ENCODE measurements at regions of chr6 and their contacts with region 1.

Region 1: GRCh38 chr6:6724539-6725467 is 136.3 kb downstream of the LY86 start:
- DNase-seq: peak; percentile 33 to 74 (median 62)
- ATAC-seq: peak; percentile 82
- H3K4me3 ChIP-seq: peak overlapping the region; percentile 44
- H3K4me3 Mint-ChIP-seq: peak overlapping the region; percentile 67 to 89 (median 81)
- H3K27ac ChIP-seq: no peak overlapping the region
- H3K27ac Mint-ChIP-seq: peak overlapping the region; percentile 47 to 84 (median 74)
- H3K4me1 ChIP-seq: peaks cover 0 to 5% of the 10 kb centered on the region in 2 donors
- H3K4me1 Mint-ChIP-seq: peaks cover 6 to 28% (median 12%) of the 10 kb centered on the region in 7 donors
- H3K27me3 ChIP-seq: no peaks in the 10 kb centered on the region
- H3K27me3 Mint-ChIP-seq: peaks cover 0 to 43% (median 0%) of the 10 kb centered on the region in 5 donors

Region 2: DNA sequence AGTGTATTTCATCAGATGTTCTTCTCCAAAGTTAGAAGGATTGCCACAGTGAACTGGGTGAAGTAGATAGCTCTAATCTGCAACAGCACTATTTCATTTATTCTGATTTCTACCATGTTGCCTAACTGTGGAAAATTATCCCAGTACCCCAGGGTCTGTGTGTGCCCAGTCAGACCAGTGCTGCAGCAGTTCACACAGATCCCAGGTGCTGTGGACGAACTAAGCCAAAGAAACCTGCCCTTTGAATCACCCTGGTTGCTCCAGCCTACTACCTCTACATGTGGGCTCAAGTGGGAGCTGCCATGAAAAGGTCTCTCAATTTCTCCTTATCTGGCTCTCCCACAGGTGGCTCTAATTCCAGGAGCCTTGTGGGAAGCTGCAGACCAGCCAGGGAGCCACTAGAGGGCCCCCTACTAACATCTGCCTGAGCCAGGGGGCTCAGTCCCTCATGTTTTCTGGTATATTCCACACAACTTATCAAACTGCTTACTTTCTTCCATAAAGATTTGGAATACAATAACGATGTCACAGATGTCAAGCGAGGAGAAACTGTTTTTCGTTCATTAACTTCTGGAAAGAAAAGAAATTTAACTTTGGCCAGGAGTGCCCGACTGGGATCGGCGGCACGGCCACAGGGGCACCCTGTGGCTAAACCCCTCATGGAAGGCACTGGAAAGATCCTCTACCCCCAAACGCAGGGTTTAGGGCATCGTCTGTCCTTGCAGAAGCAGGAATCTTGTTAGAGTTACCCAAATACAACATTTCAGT is 167.9 kb before region 1 on chr6:
- CTCF ChIA-PET with region 1: interaction called, 4 read pairs
- POLR2A ChIA-PET with region 1: no interaction called
- intact Hi-C with region 1: loop called in 1 of 2 experiments (anchors 2 kb)
- DNase-seq: peak in 7 of 9 donors; percentile 30 to 68 (median 57)
- ATAC-seq: peak; percentile 76
- H3K4me3 ChIP-seq: no peak overlapping the region
- H3K4me3 Mint-ChIP-seq: no peak overlapping the region
- H3K27ac ChIP-seq: no peak overlapping the region
- H3K27ac Mint-ChIP-seq: peak overlapping the region in 5 of 9 donors; percentile 19 to 64 (median 32)
- H3K4me1 ChIP-seq: peaks cover 0 to 4% of the 10 kb centered on the region in 2 donors
- H3K4me1 Mint-ChIP-seq: peaks cover 0 to 50% (median 18%) of the 10 kb centered on the region in 7 donors
- H3K27me3 ChIP-seq: no peaks in the 10 kb centered on the region
- H3K27me3 Mint-ChIP-seq: peaks cover 0 to 15% (median 0%) of the 10 kb centered on the region in 5 donors

Region 3: DNA sequence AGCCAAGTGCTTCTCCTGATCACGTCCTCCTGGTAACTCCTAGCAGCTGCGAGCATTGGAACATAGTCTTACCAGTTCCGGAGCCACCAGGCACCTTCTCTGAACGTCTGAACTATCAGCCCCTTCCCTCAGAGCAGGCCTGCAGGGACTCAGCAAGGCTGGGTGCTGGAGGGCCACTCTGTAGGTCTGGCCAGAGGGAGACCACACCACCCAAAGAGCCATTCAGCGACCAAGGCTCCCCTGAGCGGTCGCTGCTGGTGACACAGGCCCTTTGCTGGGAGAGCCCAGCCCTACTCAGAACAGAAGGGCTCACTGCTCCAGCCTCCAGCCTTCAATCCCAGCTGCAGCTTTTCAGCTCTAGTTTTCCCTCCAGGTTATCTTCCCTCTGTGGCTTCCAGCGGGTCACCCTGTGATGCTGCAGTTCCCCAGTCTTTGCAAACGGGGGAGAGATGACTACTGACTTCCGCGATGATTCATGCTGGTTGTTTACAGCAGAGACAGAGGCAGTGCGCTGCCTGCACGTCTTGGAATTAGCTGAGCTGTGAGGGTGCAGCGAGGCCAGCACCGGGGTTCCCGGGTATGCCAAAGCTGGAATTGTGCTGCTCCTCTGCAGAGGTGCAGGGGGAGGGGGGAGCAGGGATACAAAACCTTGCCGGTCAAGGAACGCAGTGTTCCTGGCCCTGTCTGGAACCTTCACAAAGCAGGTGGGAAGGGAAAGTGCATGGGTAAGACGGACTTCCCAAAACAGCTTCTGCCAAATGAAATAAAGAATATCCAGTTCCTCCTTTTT is 25.1 kb after region 1 on chr6:
- CTCF ChIA-PET with region 1: interaction called, 3 read pairs
- POLR2A ChIA-PET with region 1: no interaction called
- intact Hi-C with region 1: loop called in 1 of 2 experiments (anchors 2 kb)
- DNase-seq: peak in 6 of 9 donors; percentile 11 to 50 (median 24)
- ATAC-seq: peak; percentile 85
- H3K4me3 ChIP-seq: no peak overlapping the region
- H3K4me3 Mint-ChIP-seq: peak overlapping the region in 9 of 10 donors; percentile 6 to 85 (median 52)
- H3K27ac ChIP-seq: no peak overlapping the region
- H3K27ac Mint-ChIP-seq: peak overlapping the region in 6 of 9 donors; percentile 16 to 83 (median 78)
- H3K4me1 ChIP-seq: peaks cover 0 to 13% of the 10 kb centered on the region in 2 donors
- H3K4me1 Mint-ChIP-seq: peaks cover 17 to 30% (median 25%) of the 10 kb centered on the region in 7 donors
- H3K27me3 ChIP-seq: no peaks in the 10 kb centered on the region
- H3K27me3 Mint-ChIP-seq: peaks cover 0 to 5% (median 0%) of the 10 kb centered on the region in 5 donors

Region 4: DNA sequence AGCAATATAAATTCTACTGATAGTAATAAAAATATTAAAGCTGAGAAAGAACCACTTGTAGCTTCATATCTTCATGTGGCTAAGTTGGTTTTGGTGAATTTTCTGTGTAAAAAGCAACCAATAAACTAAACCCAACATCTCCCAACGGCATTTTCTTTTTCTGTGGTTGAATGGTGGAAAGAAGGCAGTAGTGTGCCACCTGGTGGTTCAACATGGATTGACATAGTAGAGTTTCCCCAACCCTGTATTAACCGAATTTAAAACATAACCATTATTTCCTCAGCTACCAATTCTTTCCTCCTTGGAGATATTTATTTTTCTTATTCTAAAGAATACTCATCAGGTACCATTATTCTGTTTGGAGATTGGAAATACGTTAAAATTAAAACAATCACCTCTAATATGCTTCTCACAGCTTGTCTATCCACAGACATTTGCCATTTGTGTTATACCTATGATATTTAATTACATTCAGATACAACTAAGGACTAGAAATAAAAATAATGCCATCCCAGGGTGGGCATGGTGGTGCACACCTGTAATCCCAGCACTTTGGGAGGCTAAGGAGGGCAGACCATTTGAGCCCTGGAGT is 1494.6 kb after region 1 on chr6:
- CTCF ChIA-PET with region 1: no interaction called
- POLR2A ChIA-PET with region 1: no interaction called
- intact Hi-C with region 1: loop called in 1 of 2 experiments (anchors 5 kb)
- DNase-seq: peak in 7 of 9 donors; percentile 4 to 53 (median 32)
- ATAC-seq: peak; percentile 75
- H3K4me3 ChIP-seq: no peak overlapping the region
- H3K4me3 Mint-ChIP-seq: no peak overlapping the region
- H3K27ac ChIP-seq: no peak overlapping the region
- H3K27ac Mint-ChIP-seq: no peak overlapping the region
- H3K4me1 ChIP-seq: no peaks in the 10 kb centered on the region
- H3K4me1 Mint-ChIP-seq: no peaks in the 10 kb centered on the region
- H3K27me3 ChIP-seq: no peaks in the 10 kb centered on the region
- H3K27me3 Mint-ChIP-seq: peaks cover 5 to 19% (median 9%) of the 10 kb centered on the region in 5 donors